AG04449 (cell line): ENCODE measurements at regions of chr16 and their contacts with region 1.

Region 1: GRCh38 chr16:85420501-85421337 is 192.4 kb upstream of the GSE1 start:
- DNase-seq: no peak
- H3K4me3 ChIP-seq: no peak overlapping the region
- CTCF ChIP-seq: peak; percentile 96

Region 2: DNA sequence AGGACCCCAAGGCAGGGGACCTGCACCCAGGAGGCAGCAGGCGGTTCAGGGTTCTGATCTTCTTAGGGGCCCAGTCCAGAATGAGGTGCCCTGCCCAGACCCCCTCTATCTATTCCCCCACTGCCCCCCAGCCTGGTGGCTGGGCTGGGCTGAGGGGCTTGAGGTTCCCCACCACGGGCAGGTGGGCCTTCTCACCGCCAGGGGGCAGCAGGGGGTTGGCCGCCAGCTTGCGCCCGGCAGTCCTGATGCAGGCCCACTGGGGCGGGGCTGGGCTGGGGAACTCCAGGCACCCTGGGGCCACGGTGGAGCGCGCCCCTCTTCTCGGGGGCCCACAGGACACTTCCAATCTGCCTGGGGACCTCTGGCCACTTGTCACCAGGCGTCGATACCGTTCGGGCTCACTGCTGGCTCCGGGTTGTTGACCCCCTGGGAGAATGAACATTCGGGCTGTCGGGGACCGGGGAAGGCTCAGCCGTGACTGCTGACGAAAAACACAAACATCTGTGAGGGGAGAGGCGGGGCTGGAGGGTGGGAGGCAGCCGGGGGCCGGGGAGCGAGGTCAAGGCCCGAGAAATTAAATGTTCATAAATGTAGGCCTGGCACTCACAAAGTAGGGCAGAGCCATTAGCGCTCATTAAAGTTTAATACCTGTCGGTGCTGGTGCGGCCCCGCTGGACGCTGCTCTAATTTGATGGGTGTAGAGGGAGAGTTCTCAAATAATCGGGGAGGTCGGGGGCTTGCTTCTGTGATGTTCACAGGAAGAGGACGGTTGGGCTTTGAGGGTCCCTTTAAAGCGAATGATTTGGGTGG is 26.8 kb before region 1 on chr16:
- CTCF ChIA-PET with region 1: interaction called, 55 read pairs
- POLR2A ChIA-PET with region 1: no interaction called
- DNase-seq: no peak
- H3K4me3 ChIP-seq: peak overlapping the region; percentile 15; the same call in 1 of the 2 replicates
- CTCF ChIP-seq: peak; percentile 95

Region 3: GRCh38 chr16:85402910-85403692 is 17.6 kb before region 1 on chr16:
- CTCF ChIA-PET with region 1: interaction called, 55 read pairs
- POLR2A ChIA-PET with region 1: no interaction called
- DNase-seq: no peak
- H3K4me3 ChIP-seq: no peak overlapping the region
- CTCF ChIP-seq: no peak

Region 4: GRCh38 chr16:85437166-85438055 is 16.7 kb after region 1 on chr16:
- CTCF ChIA-PET with region 1: interaction called, 43 read pairs
- POLR2A ChIA-PET with region 1: no interaction called
- DNase-seq: no peak
- H3K4me3 ChIP-seq: no peak overlapping the region
- CTCF ChIP-seq: no peak

Region 5: DNA sequence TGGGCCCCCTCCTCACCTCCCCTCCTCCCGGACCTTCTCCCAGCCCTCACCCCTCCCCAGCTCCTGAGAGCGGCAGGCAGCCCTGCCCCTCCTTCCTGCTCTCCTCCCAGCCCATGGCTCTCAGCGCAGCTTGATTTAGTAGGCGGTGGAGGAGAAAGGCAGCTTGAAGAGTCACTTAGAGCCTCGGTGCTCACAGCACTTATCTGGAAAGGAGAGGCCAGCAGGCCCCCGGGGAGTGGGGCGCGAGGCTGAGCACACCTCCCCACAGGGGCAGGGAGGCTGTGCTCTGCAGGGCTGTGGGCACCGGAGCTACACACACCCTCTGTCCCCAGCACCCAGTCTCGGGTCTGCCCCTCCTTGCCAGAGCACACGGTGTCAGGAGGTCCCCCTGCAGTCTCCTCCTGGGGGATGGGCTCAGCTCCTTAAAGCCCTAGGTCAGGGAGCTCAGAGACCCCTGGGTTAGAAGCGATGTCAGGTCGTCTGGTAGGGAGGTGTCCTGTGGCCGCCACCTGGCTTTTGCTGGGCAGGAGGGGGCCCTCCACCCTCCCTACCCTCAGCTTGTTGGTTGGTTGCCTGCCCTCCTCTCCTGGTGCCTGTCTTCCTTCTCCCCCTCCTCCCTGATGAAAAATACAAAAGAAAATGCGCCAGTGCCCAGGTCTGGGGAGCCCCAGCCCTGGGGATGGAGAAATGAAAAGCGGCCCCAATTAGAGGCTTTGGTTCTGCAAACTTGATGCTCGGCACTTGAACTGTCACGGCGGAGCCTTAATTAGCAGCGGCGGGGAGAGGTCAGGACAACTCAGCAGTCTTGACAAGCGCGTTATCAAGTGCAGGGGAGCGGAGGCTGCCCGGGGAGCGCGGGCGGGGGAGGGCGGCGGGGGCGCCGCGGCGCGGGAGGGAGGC is 41.3 kb after region 1 on chr16:
- CTCF ChIA-PET with region 1: interaction called, 14 read pairs
- POLR2A ChIA-PET with region 1: no interaction called
- DNase-seq: no peak
- H3K4me3 ChIP-seq: peak overlapping the region; percentile 36
- CTCF ChIP-seq: no peak

Region 6: GRCh38 chr16:85586380-85587104 is 165.8 kb after region 1 on chr16:
- CTCF ChIA-PET with region 1: interaction called, 10 read pairs
- POLR2A ChIA-PET with region 1: no interaction called
- DNase-seq: no peak
- H3K4me3 ChIP-seq: no peak overlapping the region
- CTCF ChIP-seq: no peak